ENCODE measurements at regions of chr1 and their contacts with region 1.

Region 1: DNA sequence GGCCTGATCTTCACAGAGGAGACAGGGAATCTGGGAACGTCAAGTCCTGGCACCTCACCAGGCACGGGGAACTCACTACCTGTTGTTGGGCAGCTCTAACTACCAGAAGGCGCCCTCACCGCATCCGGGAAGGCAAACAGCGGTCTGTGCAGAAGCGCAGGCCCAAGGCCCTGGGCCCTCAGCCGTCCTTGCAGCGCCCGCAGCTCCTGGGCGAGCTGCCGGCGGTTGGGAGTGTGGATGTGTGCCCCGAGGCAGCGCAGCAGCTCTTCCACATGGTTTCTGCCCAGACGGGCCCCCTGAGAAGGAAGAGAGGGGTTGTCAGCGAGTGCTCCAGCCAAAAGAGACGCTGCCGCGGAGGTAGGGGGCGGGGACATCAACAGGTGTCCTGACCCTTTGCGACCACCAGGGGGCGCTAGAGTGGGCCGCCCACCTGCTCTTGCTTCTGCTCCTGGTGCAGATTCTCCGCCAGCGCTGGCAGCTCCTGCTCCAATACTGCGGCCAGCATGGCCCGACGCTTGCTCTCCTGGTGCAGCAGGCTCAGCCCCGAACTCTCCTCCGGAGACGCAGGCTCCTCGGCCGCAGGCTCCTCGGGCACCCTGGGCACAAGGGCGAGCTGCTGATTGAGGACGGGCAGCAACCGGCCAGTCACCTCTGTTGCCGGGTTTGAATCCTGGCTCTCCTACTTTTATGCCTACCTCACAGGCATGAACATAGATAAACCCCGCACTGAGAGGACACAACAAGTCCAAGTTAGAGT is 9.3 kb downstream of the MAP3K6 start:
- DNase-seq: peak; percentile 97
- H3K4me3 ChIP-seq: peak overlapping the region in 1 of 2 experiments; percentile 48; a peak in 1 of 4 replicates
- H3K27ac ChIP-seq: no peak overlapping the region
- H3K4me1 ChIP-seq: peaks cover 0 to 5% of the 10 kb centered on the region in 2 experiments; a peak in 1 of 4 replicates
- H3K27me3 ChIP-seq: no peaks in the 10 kb centered on the region
- CTCF ChIP-seq: peak; percentile 89
- EP300 ChIP-seq: no peak
- RAD21 ChIP-seq: peak; percentile 65

Region 2: DNA sequence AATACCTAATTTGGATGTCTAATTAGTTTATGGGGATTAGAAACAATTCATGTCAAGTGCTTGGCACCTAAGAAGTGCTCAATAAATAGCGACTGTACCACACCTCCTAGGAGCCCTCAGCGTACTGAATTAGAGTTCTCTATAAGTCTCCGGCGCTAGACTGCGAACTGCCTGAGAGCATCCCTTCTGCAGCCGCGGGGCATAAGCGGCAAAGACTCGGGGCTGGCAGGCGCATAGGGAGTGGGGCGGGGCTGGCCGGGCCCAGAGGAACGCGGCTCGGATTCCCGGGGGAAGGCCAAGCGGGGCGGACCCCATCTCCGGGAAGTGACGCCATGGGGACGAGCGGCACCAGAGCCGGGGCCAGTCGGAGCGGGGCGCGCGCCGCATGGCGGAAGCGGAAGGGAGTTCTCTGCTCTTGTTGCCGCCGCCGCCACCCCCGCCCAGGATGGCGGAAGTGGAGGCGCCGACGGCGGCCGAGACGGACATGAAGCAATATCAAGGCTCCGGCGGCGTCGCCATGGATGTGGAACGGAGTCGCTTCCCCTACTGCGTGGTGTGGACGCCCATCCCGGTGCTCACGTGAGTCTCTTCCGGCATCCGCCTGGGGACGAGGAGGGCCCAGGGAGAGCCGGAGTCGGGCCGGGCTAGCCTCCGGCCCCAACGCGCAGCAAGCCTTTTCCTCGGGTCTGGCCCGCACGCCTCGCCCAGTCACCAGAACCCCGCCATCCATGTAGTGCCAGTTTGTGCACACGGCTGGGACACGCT is 35.5 kb before region 1 on chr1 and contains the start of gene TMEM222:
- CTCF ChIA-PET with region 1: interaction called, 27 read pairs
- POLR2A ChIA-PET with region 1: no interaction called
- DNase-seq: peak; percentile 98
- H3K4me3 ChIP-seq: peak within 1 kb of the TSS; percentile 95 to 100
- H3K27ac ChIP-seq: peak within 1 kb of the TSS; percentile 79 to 92
- H3K4me1 ChIP-seq: peaks cover 11 to 24% of the 10 kb centered on the region in 2 experiments; a peak in 3 of 4 replicates
- H3K27me3 ChIP-seq: no peaks in the 10 kb centered on the region
- CTCF ChIP-seq: no peak
- EP300 ChIP-seq: peak; percentile 20 to 57; a peak in 2 of 4 replicates
- RAD21 ChIP-seq: no peak
- polyA plus RNA-seq, gene TMEM222: 51.7 and 52.0 TPM in 2 replicates

Region 3: GRCh38 chr1:27341525-27342252 is 15.8 kb before region 1 on chr1 and contains the start of gene SYTL1:
- CTCF ChIA-PET with region 1: interaction called, 85 read pairs
- POLR2A ChIA-PET with region 1: no interaction called
- DNase-seq: peak; percentile 59
- H3K4me3 ChIP-seq: no peak within 1 kb of the TSS
- H3K27ac ChIP-seq: no peak within 1 kb of the TSS
- H3K4me1 ChIP-seq: peaks cover 0 to 8% of the 10 kb centered on the region in 2 experiments; a peak in 2 of 4 replicates
- H3K27me3 ChIP-seq: no peaks in the 10 kb centered on the region
- CTCF ChIP-seq: no peak
- EP300 ChIP-seq: no peak
- RAD21 ChIP-seq: no peak
- polyA plus RNA-seq, gene SYTL1: 2.0 and 3.0 TPM in 2 replicates

Region 4: DNA sequence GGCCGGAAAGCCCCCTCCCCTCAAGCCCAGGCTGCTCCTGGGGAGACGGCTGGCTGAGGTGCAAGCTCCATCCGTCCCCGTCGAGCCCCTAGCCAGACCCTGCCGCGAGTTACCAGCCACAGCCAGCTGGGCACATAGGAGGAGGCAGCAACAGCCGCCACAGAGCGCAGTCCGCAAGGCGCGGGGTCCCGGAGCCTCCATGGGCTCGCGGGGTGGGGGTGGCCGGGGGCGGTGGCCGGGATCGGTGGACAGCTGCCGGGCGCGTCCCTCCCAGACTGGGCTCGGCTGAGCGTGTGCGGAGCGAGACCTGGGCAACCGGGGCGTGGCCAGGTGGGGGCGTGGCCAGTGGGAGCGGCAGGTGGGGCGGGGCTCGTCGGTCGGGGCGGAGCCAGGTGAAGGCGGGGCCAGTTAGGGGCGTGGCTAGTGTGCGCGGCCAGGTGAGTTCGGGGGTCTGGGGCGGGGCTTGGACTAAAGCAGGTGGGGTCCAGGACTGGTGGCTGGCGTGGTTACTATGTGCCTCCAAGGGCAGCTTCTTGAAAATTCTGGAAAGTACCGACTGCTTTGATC is 25.7 kb after region 1 on chr1 and contains the start of gene CD164L2:
- CTCF ChIA-PET with region 1: interaction called, 45 read pairs
- POLR2A ChIA-PET with region 1: no interaction called
- DNase-seq: peak; percentile 70
- H3K4me3 ChIP-seq: no peak within 1 kb of the TSS
- H3K27ac ChIP-seq: no peak within 1 kb of the TSS
- H3K4me1 ChIP-seq: peaks cover 0 to 10% of the 10 kb centered on the region in 2 experiments; a peak in 1 of 4 replicates
- H3K27me3 ChIP-seq: no peaks in the 10 kb centered on the region
- CTCF ChIP-seq: no peak
- EP300 ChIP-seq: no peak
- RAD21 ChIP-seq: no peak
- polyA plus RNA-seq, gene CD164L2: 0.05 TPM in 2 replicates

Region 5: DNA sequence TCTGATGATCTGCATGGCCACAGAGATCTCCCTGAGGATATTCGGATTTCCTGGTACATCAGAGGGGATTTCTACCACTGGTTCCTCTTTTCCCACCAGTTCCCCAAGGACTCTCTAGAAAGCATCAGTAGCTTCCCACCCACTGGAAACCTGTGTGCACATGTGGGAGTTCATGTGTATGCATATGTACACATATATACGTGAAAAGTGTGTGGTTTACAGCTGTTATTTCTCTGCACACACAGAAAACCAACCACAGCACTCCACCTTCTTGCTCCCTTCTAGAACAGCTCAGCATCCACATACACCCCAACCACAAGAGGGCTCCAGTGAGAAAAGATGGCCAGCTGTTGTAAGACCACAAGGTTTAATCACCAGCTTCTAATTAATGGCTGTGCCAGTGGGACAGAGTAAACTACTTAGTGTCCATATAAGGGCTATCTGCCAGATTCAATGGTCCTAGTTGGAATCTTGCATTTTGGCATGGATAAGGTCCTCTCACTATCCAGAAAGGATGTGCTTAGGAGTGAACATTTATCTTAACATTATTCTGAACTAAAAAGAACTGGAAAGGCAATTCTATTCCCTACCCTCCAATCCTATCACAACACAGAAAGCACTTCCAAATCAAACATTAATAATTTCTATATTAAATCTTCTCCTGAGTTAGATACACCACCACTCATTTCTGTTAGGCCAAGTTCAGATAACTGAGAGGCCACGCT is 59.1 kb after region 1 on chr1:
- CTCF ChIA-PET with region 1: interaction called, 13 read pairs
- POLR2A ChIA-PET with region 1: no interaction called
- DNase-seq: peak; percentile 45
- H3K4me3 ChIP-seq: no peak overlapping the region
- H3K27ac ChIP-seq: no peak overlapping the region
- H3K4me1 ChIP-seq: peaks cover 0 to 14% of the 10 kb centered on the region in 2 experiments; a peak in 1 of 4 replicates
- H3K27me3 ChIP-seq: no peaks in the 10 kb centered on the region
- CTCF ChIP-seq: peak; percentile 58
- EP300 ChIP-seq: no peak
- RAD21 ChIP-seq: peak; percentile 56

Region 6: GRCh38 chr1:27455139-27455811 is 97.8 kb after region 1 on chr1:
- CTCF ChIA-PET with region 1: no interaction called
- POLR2A ChIA-PET with region 1: no interaction called
- DNase-seq: peak; percentile 48
- H3K4me3 ChIP-seq: no peak overlapping the region
- H3K27ac ChIP-seq: peak overlapping the region in 1 of 2 experiments; percentile 62; a peak in 2 of 4 replicates
- H3K4me1 ChIP-seq: peaks cover 3 to 7% of the 10 kb centered on the region in 2 experiments; a peak in 3 of 4 replicates
- H3K27me3 ChIP-seq: no peaks in the 10 kb centered on the region
- CTCF ChIP-seq: no peak
- EP300 ChIP-seq: peak in 1 of 2 experiments; percentile 64; a peak in 1 of 4 replicates
- RAD21 ChIP-seq: no peak

Region 7: GRCh38 chr1:27662707-27663393 is 305.4 kb after region 1 on chr1:
- CTCF ChIA-PET with region 1: interaction called, 10 read pairs
- POLR2A ChIA-PET with region 1: no interaction called
- DNase-seq: peak; percentile 86
- H3K4me3 ChIP-seq: no peak overlapping the region; a peak in 1 of 4 replicates
- H3K27ac ChIP-seq: peak overlapping the region in 1 of 2 experiments; percentile 2; a peak in 1 of 4 replicates
- H3K4me1 ChIP-seq: peaks cover 6 to 9% of the 10 kb centered on the region in 2 experiments; a peak in 2 of 4 replicates
- H3K27me3 ChIP-seq: no peaks in the 10 kb centered on the region
- CTCF ChIP-seq: peak; percentile 90
- EP300 ChIP-seq: no peak
- RAD21 ChIP-seq: peak; percentile 91